Activated T-helper 2 cell treated with anti-CD3 and anti-CD28 coated beads, Interferon-gamma antibody, Interleukin-2, Interleukin-4, amounts not matched to agents 10 μg/mL and 5 μg/mL and 100 μg/mL, durations not matched to agents 14 hours and 24 hours and 36 hours (primary cell): ENCODE measurements at regions of chr2 and their contacts with region 1.

Region 1: DNA sequence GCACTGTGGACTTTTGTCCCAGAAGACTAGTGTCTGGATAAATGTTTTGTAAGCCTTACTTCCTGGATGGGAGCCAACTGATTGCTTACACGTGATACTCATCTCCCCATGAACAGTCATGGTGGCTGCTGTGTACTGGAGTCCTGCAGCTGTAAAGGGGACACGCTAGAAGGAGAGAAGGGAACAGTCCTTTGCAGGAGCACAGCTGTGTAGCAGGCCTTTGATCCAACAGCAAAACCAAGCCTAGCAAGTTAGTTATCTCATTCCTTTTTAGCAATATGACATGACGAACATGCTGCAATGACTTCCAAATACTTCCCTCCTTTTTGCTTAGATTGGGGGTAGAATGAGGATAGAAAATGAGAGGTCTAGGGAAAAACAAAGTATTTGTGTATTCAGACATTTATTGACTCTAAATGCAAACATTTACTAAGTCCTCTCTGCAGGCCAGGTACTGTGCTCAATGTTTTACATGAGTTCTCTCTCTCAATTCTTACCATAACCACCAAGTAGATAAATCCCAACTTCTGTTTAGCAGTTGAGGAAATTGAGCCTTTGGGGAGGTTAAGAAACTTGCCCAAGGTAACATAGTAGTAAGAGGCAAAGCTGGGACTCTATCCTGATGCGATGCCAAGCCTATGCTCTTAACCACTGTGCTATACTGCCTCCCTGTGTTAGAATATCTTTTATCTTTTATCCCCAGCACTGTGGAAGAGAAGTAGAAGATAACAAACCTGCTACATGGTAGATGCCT is 55.4 kb upstream of the CD28 start:
- DNase-seq: no peak
- H3K4me3 Mint-ChIP-seq: no peak overlapping the region
- H3K27ac Mint-ChIP-seq: no peak overlapping the region
- H3K4me1 Mint-ChIP-seq: peaks cover 29% of the 10 kb centered on the region
- H3K27me3 Mint-ChIP-seq: peaks cover 5% of the 10 kb centered on the region

Region 2: GRCh38 chr2:203177361-203177760 is 473.7 kb before region 1 on chr2:
- intact Hi-C with region 1: no loop called
- DNase-seq: no peak
- H3K4me3 Mint-ChIP-seq: no peak overlapping the region
- H3K27ac Mint-ChIP-seq: no peak overlapping the region
- H3K4me1 Mint-ChIP-seq: peaks cover 5% of the 10 kb centered on the region
- H3K27me3 Mint-ChIP-seq: no peaks in the 10 kb centered on the region

Region 3: GRCh38 chr2:203327901-203328759 is 322.9 kb before region 1 on chr2 and contains the start of gene ABI2:
- intact Hi-C with region 1: loop called (anchors 2 kb)
- DNase-seq: peak; percentile 50
- H3K4me3 Mint-ChIP-seq: peak within 1 kb of the TSS; percentile 89
- H3K27ac Mint-ChIP-seq: peak within 1 kb of the TSS; percentile 80
- H3K4me1 Mint-ChIP-seq: peaks cover 25% of the 10 kb centered on the region
- H3K27me3 Mint-ChIP-seq: peaks cover 1% of the 10 kb centered on the region
- total RNA-seq, gene ABI2: 36.2 and 36.6 TPM in 2 replicates

Region 4: DNA sequence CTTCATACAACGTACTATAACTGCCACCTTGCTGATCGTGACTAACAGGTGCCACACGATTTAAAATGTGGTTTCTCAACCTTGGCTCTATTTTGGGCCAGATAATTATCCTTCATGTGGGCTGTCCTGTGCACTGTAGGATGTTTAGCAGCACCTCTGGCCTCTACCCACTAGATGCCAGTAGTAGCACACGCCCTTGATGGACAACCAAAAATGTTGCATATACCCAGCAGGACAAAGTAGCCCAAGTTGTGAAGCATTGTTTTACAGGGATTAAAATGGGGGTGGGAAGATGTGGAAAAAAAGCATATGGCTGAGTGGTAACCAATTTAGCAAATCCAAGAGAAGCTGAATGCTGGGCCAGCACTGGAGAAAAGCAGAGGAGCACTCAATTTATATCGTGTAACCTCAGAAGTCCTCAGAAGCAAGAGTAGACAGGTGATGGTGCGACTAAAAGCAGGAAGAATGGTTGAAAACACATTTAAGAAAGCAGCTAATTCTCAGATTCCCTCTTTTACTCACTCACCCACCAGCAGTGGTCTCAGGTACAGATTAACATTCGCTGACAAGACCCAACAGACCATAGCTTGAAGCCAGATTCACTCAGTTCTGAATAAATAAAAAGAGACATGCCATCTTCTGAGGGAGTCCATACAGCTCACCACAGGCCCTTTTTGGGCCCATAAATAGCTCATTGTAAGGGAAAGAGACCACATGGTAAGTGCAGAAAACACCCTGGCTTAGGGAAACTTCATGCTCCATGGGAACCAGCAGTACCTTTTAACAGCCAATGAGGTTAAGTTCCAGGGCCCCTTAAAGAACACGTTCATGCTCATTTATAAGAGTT is 166.5 kb before region 1 on chr2:
- intact Hi-C with region 1: loop called (anchors 1 kb)
- DNase-seq: peak; percentile 33
- H3K4me3 Mint-ChIP-seq: no peak overlapping the region
- H3K27ac Mint-ChIP-seq: no peak overlapping the region
- H3K4me1 Mint-ChIP-seq: peaks cover 6% of the 10 kb centered on the region
- H3K27me3 Mint-ChIP-seq: no peaks in the 10 kb centered on the region

Region 5: GRCh38 chr2:203510941-203511305 is 140.1 kb before region 1 on chr2:
- intact Hi-C with region 1: no loop called
- DNase-seq: no peak
- H3K4me3 Mint-ChIP-seq: no peak overlapping the region
- H3K27ac Mint-ChIP-seq: no peak overlapping the region
- H3K4me1 Mint-ChIP-seq: no peaks in the 10 kb centered on the region
- H3K27me3 Mint-ChIP-seq: peaks cover 2% of the 10 kb centered on the region